ENCODE measurements at regions of chr19 and their contacts with region 1.

Region 1: GRCh38 chr19:49502866-49503581 is 6.8 kb downstream of the RPS11 start:
- DNase-seq: no peak
- H3K4me3 ChIP-seq: no peak overlapping the region
- H3K27ac ChIP-seq: peak overlapping the region in 3 of 8 donors; percentile 99 to 100 (median 99)
- H3K4me1 ChIP-seq: peaks cover 29 to 73% (median 58%) of the 10 kb centered on the region in 6 donors
- H3K27me3 ChIP-seq: no peaks in the 10 kb centered on the region
- CTCF ChIP-seq: peak in 10 of 11 experiments; percentile 30 to 76 (median 70)
- POLR2A ChIP-seq: no peak

Region 2: DNA sequence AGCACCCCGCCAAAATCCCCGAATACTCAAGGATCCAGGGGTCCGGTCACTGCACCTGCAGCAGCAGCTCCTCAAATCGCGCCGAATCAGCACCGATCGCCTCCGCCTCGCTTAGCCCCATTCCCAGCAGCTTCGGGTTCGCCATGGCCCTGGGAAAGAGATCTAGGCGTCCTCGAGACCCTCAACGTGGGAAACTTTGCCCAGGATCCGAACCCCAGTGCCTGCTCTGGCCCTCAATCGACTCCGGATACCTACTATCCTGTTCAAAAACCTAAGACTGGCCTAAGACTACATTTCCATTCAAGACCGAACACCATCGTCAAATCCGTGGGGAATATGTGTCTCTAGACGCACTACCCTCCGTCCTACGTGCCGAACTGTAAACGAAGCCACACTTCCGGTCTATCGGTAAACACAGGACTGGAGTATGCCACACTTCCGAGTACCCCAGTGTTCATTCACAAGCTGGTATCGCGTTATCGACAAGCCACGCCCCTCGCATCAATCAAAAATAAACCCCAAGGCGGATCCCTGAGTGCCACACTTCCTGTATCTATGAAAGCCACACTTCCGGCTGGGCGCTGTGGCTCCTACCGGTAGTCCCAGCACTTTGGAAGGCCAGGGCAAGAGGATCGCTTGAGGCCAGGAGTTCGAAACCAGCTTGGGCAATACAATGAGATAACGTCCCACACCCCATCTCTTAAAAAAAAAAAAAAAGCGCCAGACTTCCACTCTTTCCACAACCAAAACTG is 51.4 kb before region 1 on chr19 and contains the start of gene PIH1D1:
- intact Hi-C with region 1: no loop called
- DNase-seq: peak; percentile 96
- H3K4me3 ChIP-seq: peak within 1 kb of the TSS; percentile 65 to 85 (median 74)
- H3K27ac ChIP-seq: peak within 1 kb of the TSS; percentile 95 to 98 (median 98)
- H3K4me1 ChIP-seq: peaks cover 13 to 87% (median 43%) of the 10 kb centered on the region in 6 donors
- H3K27me3 ChIP-seq: no peaks in the 10 kb centered on the region
- CTCF ChIP-seq: peak in 5 of 11 experiments; percentile 14 to 45 (median 41)
- POLR2A ChIP-seq: peak in 1 of 3 donors; percentile 34
- total RNA-seq, gene PIH1D1: 76.0 to 94.3 (median 86.1) TPM

Region 3: DNA sequence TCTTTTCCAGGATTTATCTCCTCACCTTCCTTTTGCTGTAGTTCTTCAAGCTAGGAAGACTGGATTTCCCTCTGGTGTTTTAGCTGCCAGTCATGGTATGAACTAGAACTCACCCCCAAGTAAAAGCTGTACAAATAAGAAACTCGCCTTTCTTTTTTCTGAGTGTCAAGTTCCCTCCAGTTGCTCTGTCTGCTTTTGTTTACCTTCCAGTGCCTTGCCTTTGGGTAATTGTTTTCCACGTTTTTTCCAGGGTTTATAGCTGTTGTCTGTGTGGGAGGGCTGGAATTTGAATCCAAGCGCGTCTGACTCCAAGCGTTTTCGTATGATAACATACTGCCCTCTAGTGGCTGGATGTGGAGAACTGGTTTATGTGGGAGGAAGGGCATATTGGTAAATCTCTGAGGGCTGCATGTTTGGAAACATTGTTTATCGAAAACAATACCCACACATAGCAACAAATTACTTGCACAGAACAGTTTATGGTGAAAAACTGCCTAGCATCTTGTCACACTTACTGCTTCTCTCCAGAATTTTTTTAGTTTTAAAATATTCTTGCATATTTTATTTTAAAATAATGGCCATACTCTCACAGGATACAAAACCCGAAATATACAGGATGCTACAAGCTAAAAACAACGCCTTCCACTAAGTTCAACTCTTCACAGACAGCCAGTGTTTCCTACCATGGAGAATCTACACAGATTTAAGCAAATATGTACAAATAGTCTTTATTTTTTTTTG is 44.0 kb after region 1 on chr19:
- intact Hi-C with region 1: loop called (anchors 2 kb)
- DNase-seq: no peak
- H3K4me3 ChIP-seq: no peak overlapping the region
- H3K27ac ChIP-seq: no peak overlapping the region
- H3K4me1 ChIP-seq: peaks cover 0 to 39% (median 13%) of the 10 kb centered on the region in 6 donors
- H3K27me3 ChIP-seq: no peaks in the 10 kb centered on the region
- CTCF ChIP-seq: peak; percentile 72 to 94 (median 91)
- POLR2A ChIP-seq: no peak

Region 4: GRCh38 chr19:49570138-49570856 is 67.3 kb after region 1 on chr19:
- intact Hi-C with region 1: loop called (anchors 5 kb)
- DNase-seq: no peak
- H3K4me3 ChIP-seq: no peak overlapping the region
- H3K27ac ChIP-seq: peak overlapping the region in 6 of 8 donors; percentile 23 to 76 (median 72)
- H3K4me1 ChIP-seq: peaks cover 12 to 69% (median 59%) of the 10 kb centered on the region in 6 donors
- H3K27me3 ChIP-seq: no peaks in the 10 kb centered on the region
- CTCF ChIP-seq: peak; percentile 94 to 99 (median 97)
- POLR2A ChIP-seq: peak in 1 of 3 donors; percentile 1